ENCODE measurements at regions of chr20 and their contacts with region 1.

Region 1: GRCh38 chr20:59495894-59496510 is 108.3 kb upstream of the PHACTR3 start:
- DNase-seq: no peak
- ATAC-seq: peak; percentile 89
- H3K4me3 ChIP-seq: no peak overlapping the region
- H3K27ac ChIP-seq: no peak overlapping the region
- H3K4me1 ChIP-seq: no peaks in the 10 kb centered on the region
- H3K27me3 ChIP-seq: peaks cover 11% of the 10 kb centered on the region
- CTCF ChIP-seq: peak; percentile 95

Region 2: DNA sequence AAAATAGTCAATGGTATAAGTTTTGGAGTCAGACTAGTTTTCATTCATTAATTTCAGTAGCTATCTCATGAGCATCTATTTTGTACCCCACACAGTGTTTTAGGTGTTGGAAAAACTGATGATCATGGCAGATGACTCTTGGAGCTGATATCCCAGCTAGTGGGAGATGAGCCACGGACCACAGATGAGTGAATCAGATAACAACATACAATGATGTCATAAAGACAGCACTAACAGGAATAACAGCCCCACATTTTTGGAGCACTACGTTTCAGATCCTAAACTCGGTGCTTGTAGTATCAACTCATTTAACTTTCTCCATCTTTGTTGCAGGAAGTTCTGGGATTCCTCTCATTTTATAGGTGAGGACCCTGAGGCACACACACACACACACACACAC is 263.4 kb before region 1 on chr20:
- CTCF ChIA-PET with region 1: no interaction called
- POLR2A ChIA-PET with region 1: no interaction called
- in situ Hi-C with region 1: no loop called
- intact Hi-C with region 1: no loop called
- DNase-seq: no peak
- ATAC-seq: no peak
- H3K4me3 ChIP-seq: no peak overlapping the region
- H3K27ac ChIP-seq: no peak overlapping the region
- H3K4me1 ChIP-seq: no peaks in the 10 kb centered on the region
- H3K27me3 ChIP-seq: peaks cover 21% of the 10 kb centered on the region
- CTCF ChIP-seq: no peak

Region 3: GRCh38 chr20:59258221-59258621 is 237.8 kb before region 1 on chr20:
- CTCF ChIA-PET with region 1: interaction called, 12 read pairs
- POLR2A ChIA-PET with region 1: no interaction called
- in situ Hi-C with region 1: no loop called
- intact Hi-C with region 1: no loop called
- DNase-seq: no peak
- ATAC-seq: no peak
- H3K4me3 ChIP-seq: no peak overlapping the region
- H3K27ac ChIP-seq: no peak overlapping the region
- H3K4me1 ChIP-seq: no peaks in the 10 kb centered on the region
- H3K27me3 ChIP-seq: peaks cover 19% of the 10 kb centered on the region
- CTCF ChIP-seq: no peak

Region 4: DNA sequence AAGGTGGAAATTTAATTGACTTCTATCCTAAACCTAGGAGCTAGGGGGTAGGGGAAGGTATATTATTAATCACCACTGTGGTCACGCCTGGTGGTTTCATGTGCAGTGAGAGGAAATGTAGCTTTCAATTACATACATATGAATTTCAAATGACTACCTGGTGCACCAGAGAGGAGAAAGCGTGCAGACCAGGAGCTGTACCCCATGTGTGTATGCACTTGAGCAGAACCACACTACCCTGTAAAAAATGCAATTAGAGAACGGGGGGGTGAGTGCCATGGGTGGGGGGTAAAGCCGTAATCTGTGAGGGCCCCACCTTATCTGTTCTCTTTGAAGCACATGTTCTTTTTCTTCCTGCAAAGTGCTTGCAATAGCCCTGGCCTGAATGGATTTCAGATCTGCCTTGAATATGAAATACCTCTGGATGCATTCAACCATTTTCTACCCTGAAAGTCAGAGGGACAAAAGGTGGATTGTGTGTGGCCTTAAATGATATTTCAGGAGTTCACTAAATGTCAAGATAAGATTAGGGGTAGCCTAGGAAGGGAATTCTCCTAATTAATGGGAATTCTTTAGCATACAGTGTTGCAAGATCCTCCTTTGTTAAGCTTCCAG is 226.5 kb before region 1 on chr20:
- CTCF ChIA-PET with region 1: interaction called, 10 read pairs
- POLR2A ChIA-PET with region 1: no interaction called
- in situ Hi-C with region 1: no loop called
- intact Hi-C with region 1: no loop called
- DNase-seq: no peak
- ATAC-seq: no peak
- H3K4me3 ChIP-seq: no peak overlapping the region
- H3K27ac ChIP-seq: no peak overlapping the region
- H3K4me1 ChIP-seq: no peaks in the 10 kb centered on the region
- H3K27me3 ChIP-seq: peaks cover 29% of the 10 kb centered on the region
- CTCF ChIP-seq: no peak

Region 5: GRCh38 chr20:59422885-59423865 is 72.8 kb before region 1 on chr20:
- CTCF ChIA-PET with region 1: interaction called, 13 read pairs
- POLR2A ChIA-PET with region 1: no interaction called
- in situ Hi-C with region 1: no loop called
- intact Hi-C with region 1: no loop called
- DNase-seq: no peak
- ATAC-seq: no peak
- H3K4me3 ChIP-seq: no peak overlapping the region
- H3K27ac ChIP-seq: no peak overlapping the region
- H3K4me1 ChIP-seq: no peaks in the 10 kb centered on the region
- H3K27me3 ChIP-seq: peaks cover 6% of the 10 kb centered on the region
- CTCF ChIP-seq: no peak

Region 6: DNA sequence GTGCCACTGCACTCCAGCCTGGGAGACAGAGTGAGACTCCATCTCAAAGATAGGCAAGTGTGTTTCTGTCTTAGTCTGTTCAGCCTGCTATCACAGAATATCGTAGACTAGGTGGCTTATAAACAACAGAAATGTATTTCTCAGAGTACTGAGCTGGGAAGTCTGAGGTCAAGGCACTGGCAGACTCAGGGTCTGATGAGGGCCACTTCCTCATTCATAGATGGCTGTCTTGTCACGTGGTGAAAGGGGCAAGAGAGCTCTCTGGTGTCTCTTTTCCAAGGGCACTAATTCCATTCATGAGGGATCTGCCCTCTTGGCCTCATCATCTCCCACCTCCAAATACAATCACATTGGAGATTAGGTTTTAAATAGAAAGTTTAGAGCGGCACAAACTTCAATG is 12.7 kb after region 1 on chr20:
- CTCF ChIA-PET with region 1: interaction called, 11 read pairs
- POLR2A ChIA-PET with region 1: no interaction called
- in situ Hi-C with region 1: no loop called
- intact Hi-C with region 1: no loop called
- DNase-seq: no peak
- ATAC-seq: no peak
- H3K4me3 ChIP-seq: no peak overlapping the region
- H3K27ac ChIP-seq: no peak overlapping the region
- H3K4me1 ChIP-seq: no peaks in the 10 kb centered on the region
- H3K27me3 ChIP-seq: peaks cover 15% of the 10 kb centered on the region
- CTCF ChIP-seq: no peak

Measured in Panc1 (cell line).